ENCODE measurements at regions of chr10 and their contacts with region 1.

Region 1: DNA sequence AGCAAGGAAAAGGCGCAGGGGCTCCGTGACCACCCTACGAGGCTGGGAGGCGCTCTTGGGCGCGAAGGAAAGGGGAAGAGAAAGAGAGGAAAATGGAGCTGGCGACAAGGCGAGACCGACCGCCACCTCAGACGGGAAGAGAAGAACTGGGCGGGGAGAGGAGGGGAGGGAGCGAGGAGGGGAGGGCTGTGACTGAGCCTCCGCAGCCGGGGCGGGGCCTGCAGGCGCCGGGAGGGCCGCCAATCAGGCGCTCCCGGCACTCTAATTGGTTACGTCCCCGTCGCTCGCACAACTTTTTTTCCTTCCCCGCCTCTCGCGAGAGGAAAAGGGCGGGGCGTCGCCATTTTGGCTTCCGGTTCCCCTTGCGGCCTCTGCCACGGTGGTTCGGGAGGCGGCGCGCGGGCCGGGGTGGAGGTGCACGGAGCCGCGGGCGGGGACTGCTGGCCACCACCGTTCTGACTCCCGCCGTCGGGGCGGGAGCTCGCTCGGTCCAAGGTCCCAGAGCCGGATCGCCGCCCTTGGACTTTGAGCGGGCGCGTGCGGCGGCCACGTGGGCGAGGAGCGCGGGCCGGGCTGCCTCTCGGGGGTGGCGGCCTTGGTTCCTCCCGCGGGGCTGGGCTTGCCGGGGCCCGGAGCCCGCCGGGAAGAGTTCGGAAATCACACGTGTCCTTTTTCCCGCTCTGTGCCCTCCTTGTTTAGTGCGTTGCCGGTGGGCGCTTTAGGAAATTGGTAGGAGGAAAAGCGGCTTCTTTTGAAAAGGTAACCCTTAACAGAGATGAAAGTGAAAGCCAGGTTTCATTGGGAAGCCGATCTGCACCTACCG is at the start of gene GDI2:
- DNase-seq: peak; percentile 93 to 99 (median 95)

Region 2: DNA sequence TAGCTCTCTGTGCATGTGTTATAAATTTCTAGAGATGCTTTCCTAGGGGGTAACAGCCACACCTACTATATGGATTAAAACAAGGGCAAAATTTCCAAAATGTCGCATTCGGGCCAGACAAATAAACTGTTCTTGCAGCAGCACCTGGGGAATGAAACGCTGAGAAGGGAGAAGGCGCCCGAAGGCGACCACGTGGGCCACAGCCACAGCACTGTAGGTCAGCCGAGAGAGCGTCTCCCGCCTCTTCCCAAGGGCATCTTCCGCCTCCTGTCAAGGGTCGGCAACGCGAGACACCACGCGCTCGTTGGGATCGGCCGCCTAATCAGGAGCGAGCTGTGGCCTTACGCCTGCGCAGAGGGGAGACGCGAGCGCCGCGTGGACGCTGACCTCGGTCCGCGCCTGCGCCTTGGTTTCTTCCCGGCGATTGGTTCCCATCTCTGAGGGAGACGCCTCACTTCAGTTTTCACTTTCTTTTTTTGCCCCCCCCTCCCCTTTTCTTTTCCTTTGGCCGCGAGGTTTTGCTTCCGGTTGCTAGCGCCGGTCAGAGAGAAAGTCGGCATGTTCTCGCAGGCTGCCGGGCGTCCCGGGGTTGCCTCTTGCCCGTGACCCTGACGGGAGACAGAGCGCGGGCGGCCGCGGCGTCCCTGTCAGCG is 129.1 kb before region 1 on chr10 and contains the start of gene TASOR2:
- intact Hi-C with region 1: loop called (anchors 2 kb)
- DNase-seq: peak; percentile 93 to 99 (median 97)

Region 3: GRCh38 chr10:5858811-5859210 is 45.3 kb after region 1 on chr10:
- intact Hi-C with region 1: loop called (anchors 5 kb)
- DNase-seq: peak in 7 of 10 donors; percentile 18 to 92 (median 52)

Region 4: DNA sequence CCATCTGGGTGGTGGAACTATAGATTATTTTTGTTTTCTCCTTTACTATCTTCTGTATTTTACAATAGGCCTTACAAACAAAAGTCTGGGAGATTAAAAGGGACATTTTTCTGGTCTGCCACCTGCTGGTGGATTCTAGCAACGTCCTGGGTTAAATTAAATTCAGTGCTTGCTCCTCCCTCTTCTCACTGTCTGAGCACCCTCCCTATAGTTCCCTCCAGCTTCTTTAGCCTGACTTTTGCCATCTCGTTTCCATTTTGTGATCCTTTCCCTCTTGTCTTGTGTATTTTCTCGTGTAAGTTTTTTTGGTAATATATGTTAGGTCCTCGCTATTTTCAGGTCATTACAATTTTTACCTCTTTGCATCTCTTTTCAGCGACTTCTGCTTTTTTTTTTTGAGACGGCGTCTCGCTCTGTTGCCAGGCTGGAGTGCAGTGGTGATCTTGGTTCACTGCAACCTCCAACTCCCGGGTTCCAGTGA is 60.1 kb after region 1 on chr10:
- intact Hi-C with region 1: loop called (anchors 5 kb)
- DNase-seq: peak in 7 of 10 donors; percentile 34 to 88 (median 73)

Region 5: GRCh38 chr10:5889624-5890451 is 76.3 kb after region 1 on chr10 and contains the starts of genes ANKRD16 and FBH1:
- intact Hi-C with region 1: loop called (anchors 1 kb)
- DNase-seq: peak; percentile 96 to 100 (median 98)